Right ventricle myocardium inferior (tissue), 1 donor: ENCODE measurements at regions of chr9 and their contacts with region 1.

Region 1: DNA sequence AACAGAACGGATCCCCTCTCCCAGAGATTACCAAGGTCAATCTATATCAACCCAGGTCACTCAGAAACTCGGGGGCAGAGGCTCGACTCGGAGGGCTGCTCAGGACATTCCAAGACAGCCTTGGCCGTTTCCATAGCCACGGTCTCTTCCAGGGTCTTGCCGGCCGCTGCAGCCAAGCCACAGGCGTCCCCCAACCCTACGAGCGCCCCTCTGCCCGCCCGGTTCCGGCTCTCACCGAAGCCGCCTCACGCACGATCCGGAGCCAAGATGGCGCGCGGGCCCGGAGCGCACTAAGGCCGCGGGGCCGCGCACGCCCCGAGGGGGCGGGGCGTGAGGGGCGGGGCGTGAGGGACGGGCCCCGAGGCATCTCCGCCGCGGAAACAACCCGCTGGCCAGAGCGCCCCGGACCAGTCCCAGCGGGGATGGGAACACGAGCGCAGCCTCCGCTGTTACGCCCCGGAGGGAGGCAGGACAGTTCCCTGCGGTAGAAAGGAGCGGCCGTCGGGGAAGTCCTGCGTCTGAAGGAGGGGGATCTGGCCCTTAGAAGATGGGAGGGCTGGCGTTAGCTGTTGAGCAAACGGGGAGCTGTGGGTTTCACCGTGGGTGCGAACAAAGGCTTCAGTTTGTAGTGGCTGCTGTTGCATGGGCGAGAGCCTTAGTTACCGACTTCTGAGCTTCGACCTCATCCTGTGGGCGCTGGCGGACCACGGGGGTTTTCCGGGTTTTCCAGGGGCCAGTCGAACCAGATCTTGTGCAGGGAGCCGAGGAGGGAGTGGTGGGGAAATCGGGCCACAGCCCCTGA is at the start of gene RPP25L:
- DNase-seq: peak; percentile 95
- ATAC-seq: peak; percentile 95
- total RNA-seq, gene RPP25L: 38.3 TPM

Region 2: DNA sequence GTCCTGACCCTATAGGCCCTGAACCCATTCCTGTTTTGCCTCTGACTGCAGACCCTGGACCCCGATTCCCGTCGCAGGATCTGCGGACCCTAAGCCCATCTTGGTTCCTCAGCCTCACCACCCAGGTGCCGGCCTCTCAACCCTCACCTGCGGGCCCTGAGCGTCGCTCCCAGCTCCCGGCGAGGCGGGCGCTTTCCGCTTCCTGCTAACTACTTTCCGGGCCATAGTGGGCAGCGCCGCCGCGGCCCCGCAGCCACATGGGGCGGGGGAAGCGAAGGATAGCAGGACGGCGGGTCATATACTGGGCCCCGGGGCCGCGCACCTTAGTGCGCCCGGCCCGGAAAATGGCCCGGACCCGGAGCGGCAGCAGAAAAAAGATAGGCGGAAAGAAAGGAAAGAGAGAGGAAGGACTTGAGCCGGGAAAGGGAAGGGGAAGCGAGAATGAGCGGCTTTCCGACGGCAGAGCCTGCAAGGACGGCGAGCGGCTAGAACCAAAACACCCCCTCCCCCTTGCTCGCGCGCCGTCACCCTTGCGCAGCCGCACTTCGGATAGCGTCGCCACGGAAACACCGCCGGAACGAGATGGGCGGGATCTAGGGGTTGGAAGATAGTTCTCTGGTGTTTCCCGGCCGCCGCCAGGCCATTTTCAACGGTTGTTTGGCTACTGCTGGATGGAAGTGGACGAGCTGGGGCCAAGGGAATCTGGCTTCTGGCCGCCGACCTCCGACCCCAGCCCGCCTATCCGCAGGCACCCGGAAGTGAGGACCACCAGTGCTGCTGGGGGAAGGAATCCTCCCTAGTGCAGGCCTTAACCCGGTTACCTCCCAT is 485.6 kb before region 1 on chr9 and contains the start of gene DCAF12:
- intact Hi-C with region 1: loop called (anchors 10 kb)
- DNase-seq: peak; percentile 95
- ATAC-seq: peak; percentile 97
- total RNA-seq, gene DCAF12: 17.6 TPM

Region 3: GRCh38 chr9:34413231-34413852 is 198.7 kb before region 1 on chr9:
- intact Hi-C with region 1: no loop called
- DNase-seq: no peak
- ATAC-seq: no peak

Region 4: DNA sequence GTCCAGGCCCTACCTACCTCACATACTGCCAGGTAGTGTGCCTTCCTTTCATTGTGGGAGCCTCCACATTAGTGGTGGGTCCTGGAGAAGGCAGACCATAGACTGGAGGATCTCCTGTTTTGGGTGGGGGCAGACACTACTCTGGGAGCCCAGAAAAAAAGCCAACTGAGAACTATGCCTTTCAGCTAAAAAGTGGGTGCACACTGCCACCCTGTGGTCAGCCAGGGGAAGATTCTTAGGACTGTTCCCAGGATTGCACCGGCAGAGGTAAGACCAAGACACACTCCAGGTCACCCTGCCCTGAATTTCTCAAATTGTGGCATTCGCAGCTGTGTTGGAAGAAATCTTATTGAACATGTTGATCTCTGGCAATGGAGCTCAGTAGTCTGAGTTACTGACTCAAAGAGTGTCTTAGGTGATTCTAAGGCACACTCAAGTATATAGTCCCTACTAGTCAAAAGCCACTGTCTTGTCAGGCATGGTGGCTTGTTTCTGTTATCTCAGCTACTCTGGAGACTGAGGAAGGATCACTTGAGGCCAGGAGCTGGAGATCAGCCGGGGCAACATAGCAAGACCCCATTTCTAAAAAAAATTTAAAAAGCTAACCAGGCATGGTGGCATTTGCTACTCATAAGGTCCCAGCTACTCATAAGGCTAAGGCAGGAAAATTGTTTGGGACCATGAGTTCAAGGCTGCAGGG is 22.0 kb after region 1 on chr9:
- intact Hi-C with region 1: loop called (anchors 1 kb)
- DNase-seq: peak; percentile 73
- ATAC-seq: peak; percentile 37